Mucosa of descending colon (tissue), 3 donors: ENCODE measurements at regions of chr5 and their contacts with region 1.

Region 1: GRCh38 chr5:147453875-147454814 is 55.7 kb downstream of the DPYSL3 start:
- DNase-seq: peak; percentile 83 to 87 (median 84)
- ATAC-seq: peak; percentile 85
- H3K4me3 ChIP-seq: no peak overlapping the region
- H3K4me1 ChIP-seq: peaks cover 14% of the 10 kb centered on the region
- CTCF ChIP-seq: peak; percentile 76

Region 2: DNA sequence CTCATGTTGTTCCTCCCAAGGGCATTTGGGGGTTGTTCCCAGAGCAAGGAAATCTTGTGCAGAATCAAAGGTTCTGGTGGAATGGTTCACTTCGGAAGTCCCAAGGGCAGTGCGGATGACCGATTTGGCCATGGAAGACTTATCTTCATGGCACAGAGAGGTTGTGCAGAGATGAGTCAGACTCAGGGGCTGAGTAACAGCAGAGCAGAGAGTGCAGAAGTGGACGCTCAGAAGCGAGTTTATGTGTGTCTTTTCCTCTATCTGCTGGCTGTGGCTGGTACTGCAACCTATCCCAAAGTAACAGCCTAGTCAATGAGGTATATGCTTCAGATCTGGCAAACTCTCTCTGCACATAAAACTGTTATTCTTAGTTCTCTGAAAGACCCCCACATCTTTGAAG is 62.4 kb before region 1 on chr5:
- intact Hi-C with region 1: no loop called
- DNase-seq: peak in 1 of 3 donors; percentile 57
- ATAC-seq: peak; percentile 85
- H3K4me3 ChIP-seq: no peak overlapping the region
- H3K4me1 ChIP-seq: no peaks in the 10 kb centered on the region
- CTCF ChIP-seq: peak; percentile 12

Region 3: GRCh38 chr5:147558826-147559225 is 104.7 kb after region 1 on chr5:
- intact Hi-C with region 1: loop called (anchors 5 to 10 kb)
- DNase-seq: peak in 1 of 3 donors; percentile 44
- ATAC-seq: peak; percentile 51
- H3K4me3 ChIP-seq: no peak overlapping the region
- H3K4me1 ChIP-seq: no peaks in the 10 kb centered on the region
- CTCF ChIP-seq: no peak

Region 4: GRCh38 chr5:148042881-148043280 is 588.7 kb after region 1 on chr5:
- intact Hi-C with region 1: no loop called
- DNase-seq: no peak
- ATAC-seq: no peak
- H3K4me3 ChIP-seq: no peak overlapping the region
- H3K4me1 ChIP-seq: no peaks in the 10 kb centered on the region
- CTCF ChIP-seq: no peak